IMR-90 (cell line): ENCODE measurements at regions of chr2 and their contacts with region 1.

Region 1: DNA sequence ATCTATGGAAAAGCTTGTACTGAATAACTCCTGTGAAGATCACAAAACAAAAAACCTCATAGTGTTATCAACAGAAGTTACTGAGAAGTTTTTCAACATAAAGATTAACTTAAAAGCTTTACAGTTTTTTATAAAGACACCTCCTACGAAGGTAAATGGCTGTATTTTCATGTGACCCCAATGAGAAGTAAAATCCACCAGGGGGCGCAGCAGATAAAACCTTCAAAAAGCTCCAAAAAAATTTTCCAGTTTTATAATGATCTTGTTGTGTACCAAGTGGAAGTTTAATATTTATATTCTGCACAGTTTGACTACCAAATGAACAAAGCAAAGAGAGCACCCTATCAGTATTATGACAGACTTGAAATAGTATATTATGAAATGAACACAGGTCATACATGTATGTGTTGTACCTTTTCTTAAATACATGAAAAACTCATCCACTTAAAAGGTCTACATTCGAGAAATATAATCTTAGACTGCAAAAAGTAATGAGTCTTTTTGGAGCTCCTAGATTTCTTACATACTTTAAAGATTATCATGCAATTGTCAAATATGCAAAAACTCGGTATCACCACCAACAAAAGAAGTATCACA is 38.5 kb downstream of the PNO1 start:
- DNase-seq: peak; percentile 35
- ATAC-seq: no peak
- H3K4me3 ChIP-seq: no peak overlapping the region
- H3K27ac ChIP-seq: no peak overlapping the region
- H3K4me1 ChIP-seq: peaks cover 8% of the 10 kb centered on the region
- H3K27me3 ChIP-seq: no peaks in the 10 kb centered on the region
- CTCF ChIP-seq: peak; percentile 45
- POLR2A ChIP-seq: no peak
- RAD21 ChIP-seq: peak; percentile 38

Region 2: GRCh38 chr2:67221266-67221665 is 975.0 kb before region 1 on chr2:
- CTCF ChIA-PET with region 1: no interaction called
- POLR2A ChIA-PET with region 1: no interaction called
- dilution Hi-C with region 1: no loop called
- in situ Hi-C with region 1: no loop called
- intact Hi-C with region 1: no loop called
- DNase-seq: peak; percentile 58
- ATAC-seq: no peak
- H3K4me3 ChIP-seq: no peak overlapping the region
- H3K27ac ChIP-seq: no peak overlapping the region
- H3K4me1 ChIP-seq: peaks cover 6% of the 10 kb centered on the region
- H3K27me3 ChIP-seq: no peaks in the 10 kb centered on the region
- CTCF ChIP-seq: no peak
- POLR2A ChIP-seq: no peak
- RAD21 ChIP-seq: no peak

Region 3: DNA sequence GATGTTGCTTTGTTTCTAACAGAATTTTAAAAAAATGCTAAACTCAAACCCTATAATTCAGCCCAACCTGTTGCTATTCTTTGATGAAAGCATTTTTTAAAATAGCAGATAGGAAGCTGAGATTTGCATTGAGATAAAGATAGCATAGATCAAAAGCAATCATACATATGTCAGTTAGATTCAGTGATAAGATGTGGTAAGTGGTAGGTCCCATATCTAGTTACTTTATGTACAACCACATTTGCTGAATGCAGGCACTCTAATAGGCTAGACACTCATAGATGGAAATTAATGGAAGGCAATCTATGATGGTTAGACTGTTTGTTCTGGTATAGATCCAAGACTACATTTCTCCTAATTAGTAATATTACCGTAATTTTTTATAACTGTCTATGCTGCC is 106.3 kb before region 1 on chr2:
- CTCF ChIA-PET with region 1: no interaction called
- POLR2A ChIA-PET with region 1: no interaction called
- dilution Hi-C with region 1: no loop called
- in situ Hi-C with region 1: no loop called
- intact Hi-C with region 1: no loop called
- DNase-seq: no peak
- ATAC-seq: no peak
- H3K4me3 ChIP-seq: no peak overlapping the region
- H3K27ac ChIP-seq: no peak overlapping the region
- H3K4me1 ChIP-seq: peaks cover 2% of the 10 kb centered on the region; the same call in 1 of the 2 replicates
- H3K27me3 ChIP-seq: peaks cover 19% of the 10 kb centered on the region
- CTCF ChIP-seq: no peak
- POLR2A ChIP-seq: no peak
- RAD21 ChIP-seq: no peak

Region 4: DNA sequence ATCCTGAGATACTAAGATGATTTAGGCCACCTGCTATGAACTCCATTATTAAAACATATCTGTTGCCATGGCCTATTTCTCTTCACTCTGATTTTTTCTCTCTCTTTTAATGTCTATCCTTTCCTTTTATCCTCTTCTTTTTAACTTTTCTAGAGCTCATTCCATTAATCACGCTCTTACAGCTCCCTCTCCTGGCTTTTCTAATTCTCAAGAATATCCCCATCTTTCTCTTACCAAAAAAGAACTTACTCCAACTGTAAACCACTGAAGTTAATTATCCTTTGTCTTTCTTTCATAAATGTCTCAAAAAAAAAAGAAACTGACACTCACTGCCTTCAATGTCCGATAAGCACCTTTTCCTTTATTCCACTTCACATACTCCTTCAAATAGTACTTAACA is 48.2 kb after region 1 on chr2:
- CTCF ChIA-PET with region 1: no interaction called
- POLR2A ChIA-PET with region 1: no interaction called
- dilution Hi-C with region 1: no loop called
- in situ Hi-C with region 1: loop called (anchors 10 kb)
- intact Hi-C with region 1: loop called (anchors 5 kb)
- DNase-seq: no peak
- ATAC-seq: 0 out of 2 replicates have a peak, but pooled peaks have one; percentile 11
- H3K4me3 ChIP-seq: no peak overlapping the region
- H3K27ac ChIP-seq: no peak overlapping the region
- H3K4me1 ChIP-seq: peaks cover 21% of the 10 kb centered on the region
- H3K27me3 ChIP-seq: no peaks in the 10 kb centered on the region
- CTCF ChIP-seq: peak; percentile 33; the same call in 1 of the 2 replicates
- POLR2A ChIP-seq: no peak
- RAD21 ChIP-seq: no peak

Region 5: DNA sequence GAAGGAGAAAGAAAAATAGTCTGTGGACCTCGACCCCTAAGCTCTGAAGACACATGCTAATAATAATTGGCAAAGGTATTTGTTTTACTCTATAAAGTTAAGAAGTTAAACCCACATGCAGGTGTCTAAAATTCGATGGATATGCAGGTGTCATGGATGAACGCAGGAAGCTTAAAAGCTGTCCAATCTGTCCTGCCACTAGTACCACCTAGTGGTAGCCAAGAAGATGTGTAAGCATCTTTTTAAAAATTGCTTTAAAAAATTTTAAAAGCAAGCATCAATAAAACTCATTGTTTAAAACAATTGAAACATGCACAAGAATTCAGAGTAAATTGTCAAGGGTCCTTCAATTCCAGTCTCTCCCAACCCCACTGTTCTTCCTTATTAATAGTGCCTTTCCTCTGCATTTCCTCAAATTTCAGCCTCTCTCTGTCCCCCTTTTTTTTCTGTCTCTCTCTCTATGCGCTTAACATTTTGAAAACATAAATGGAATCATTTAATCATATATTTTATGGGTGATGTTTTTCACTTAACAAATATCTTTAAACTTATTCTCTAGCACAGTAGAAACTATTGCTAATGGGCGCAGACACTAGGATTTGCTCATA is 86.7 kb after region 1 on chr2:
- CTCF ChIA-PET with region 1: no interaction called
- POLR2A ChIA-PET with region 1: no interaction called
- dilution Hi-C with region 1: no loop called
- in situ Hi-C with region 1: no loop called
- intact Hi-C with region 1: loop called (anchors 5 kb)
- DNase-seq: peak; percentile 61
- ATAC-seq: peak; percentile 74
- H3K4me3 ChIP-seq: no peak overlapping the region
- H3K27ac ChIP-seq: no peak overlapping the region
- H3K4me1 ChIP-seq: no peaks in the 10 kb centered on the region; the same call in 1 of the 2 replicates
- H3K27me3 ChIP-seq: no peaks in the 10 kb centered on the region
- CTCF ChIP-seq: peak; percentile 83
- POLR2A ChIP-seq: no peak
- RAD21 ChIP-seq: peak; percentile 87